HCT116 (cell line): ENCODE measurements at regions of chr6 and their contacts with region 1.

Region 1: DNA sequence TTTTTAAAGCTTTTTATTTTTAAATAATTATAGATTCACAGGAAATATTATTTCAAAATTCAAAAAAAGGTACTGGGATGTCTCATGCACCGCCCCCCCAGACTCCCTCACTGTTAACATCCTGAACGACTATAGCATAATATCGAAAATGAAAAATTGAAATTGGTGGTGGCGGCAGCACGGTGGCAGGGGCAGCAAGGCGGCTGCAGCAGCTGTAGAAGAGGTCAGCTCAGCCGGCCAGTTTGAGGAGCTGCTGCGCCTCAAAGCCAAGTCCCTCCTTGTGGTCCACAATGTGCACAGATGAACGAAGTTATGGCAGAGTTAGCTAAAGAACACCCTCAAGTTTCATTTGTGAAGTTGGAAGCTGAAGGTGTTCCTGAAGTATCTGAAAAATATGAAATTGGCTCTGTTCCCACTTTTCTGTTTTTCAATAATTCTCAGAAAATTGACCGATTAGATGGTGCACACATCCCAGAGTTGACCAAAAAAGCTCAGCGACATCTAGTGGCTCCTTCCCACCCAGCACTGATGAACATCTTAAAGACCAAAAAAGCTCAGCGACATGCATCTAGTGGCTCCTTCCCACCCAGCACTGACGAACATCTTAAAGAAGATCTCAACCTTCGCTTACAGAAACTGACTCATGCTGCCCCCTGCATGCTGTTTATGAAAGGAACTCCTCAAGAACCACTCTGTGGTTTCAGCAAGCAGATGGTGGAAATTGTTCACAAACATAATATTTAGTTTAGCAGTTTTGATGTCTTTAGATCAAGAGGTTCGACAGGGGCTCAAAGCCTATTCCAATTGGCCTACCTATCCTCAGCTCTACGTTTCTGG is 100.8 kb downstream of the FAM217A start:
- DNase-seq: peak; percentile 74
- ATAC-seq: peak; percentile 96
- H3K4me3 ChIP-seq: no peak overlapping the region
- H3K27ac ChIP-seq: no peak overlapping the region
- H3K4me1 ChIP-seq: peaks cover 2 to 5% of the 10 kb centered on the region in 2 experiments; a peak in 3 of 4 replicates
- H3K27me3 ChIP-seq: no peaks in the 10 kb centered on the region
- CTCF ChIP-seq: peak; percentile 71 to 83 (median 79)
- POLR2A ChIP-seq: no peak
- RAD21 ChIP-seq: peak; percentile 69

Region 2: GRCh38 chr6:3742426-3743344 is 235.4 kb before region 1 on chr6:
- CTCF ChIA-PET with region 1: interaction called, 8 read pairs
- POLR2A ChIA-PET with region 1: no interaction called
- RAD21 ChIA-PET with region 1: no interaction called
- intact Hi-C with region 1: loop called (anchors 1 kb)
- DNase-seq: peak; percentile 48
- ATAC-seq: peak; percentile 96
- H3K4me3 ChIP-seq: peak overlapping the region in 1 of 2 experiments; percentile 17; a peak in 2 of 4 replicates
- H3K27ac ChIP-seq: no peak overlapping the region
- H3K4me1 ChIP-seq: peaks cover 0 to 13% of the 10 kb centered on the region in 2 experiments; a peak in 2 of 4 replicates
- H3K27me3 ChIP-seq: no peaks in the 10 kb centered on the region
- CTCF ChIP-seq: peak; percentile 86 to 95 (median 91)
- POLR2A ChIP-seq: no peak
- RAD21 ChIP-seq: peak; percentile 98

Region 3: GRCh38 chr6:3887150-3887700 is 90.9 kb before region 1 on chr6:
- CTCF ChIA-PET with region 1: interaction called, 12 read pairs
- POLR2A ChIA-PET with region 1: no interaction called
- RAD21 ChIA-PET with region 1: no interaction called
- intact Hi-C with region 1: no loop called
- DNase-seq: no peak
- ATAC-seq: no peak
- H3K4me3 ChIP-seq: no peak overlapping the region
- H3K27ac ChIP-seq: no peak overlapping the region
- H3K4me1 ChIP-seq: 0 out of 4 replicates have a peak, but pooled peaks cover 0 to 5% of the 10 kb centered on the region in 2 experiments
- H3K27me3 ChIP-seq: no peaks in the 10 kb centered on the region
- CTCF ChIP-seq: peak; percentile 26 to 46 (median 39); a peak in 4 of 6 replicates
- POLR2A ChIP-seq: no peak
- RAD21 ChIP-seq: peak; percentile 64

Region 4: GRCh38 chr6:3990692-3991501 is 12.8 kb after region 1 on chr6:
- CTCF ChIA-PET with region 1: interaction called, 24 read pairs
- POLR2A ChIA-PET with region 1: no interaction called
- RAD21 ChIA-PET with region 1: interaction called, 3 read pairs
- intact Hi-C with region 1: no loop called
- DNase-seq: peak; percentile 65
- ATAC-seq: peak; percentile 95
- H3K4me3 ChIP-seq: no peak overlapping the region
- H3K27ac ChIP-seq: no peak overlapping the region
- H3K4me1 ChIP-seq: peaks cover 5 to 10% of the 10 kb centered on the region in 2 experiments
- H3K27me3 ChIP-seq: no peaks in the 10 kb centered on the region
- CTCF ChIP-seq: peak; percentile 67 to 94 (median 94)
- POLR2A ChIP-seq: no peak
- RAD21 ChIP-seq: peak; percentile 87

Region 5: GRCh38 chr6:4008324-4009047 is 30.4 kb after region 1 on chr6:
- CTCF ChIA-PET with region 1: interaction called, 10 read pairs
- POLR2A ChIA-PET with region 1: no interaction called
- RAD21 ChIA-PET with region 1: no interaction called
- intact Hi-C with region 1: no loop called
- DNase-seq: peak; percentile 56
- ATAC-seq: peak; percentile 80
- H3K4me3 ChIP-seq: no peak overlapping the region
- H3K27ac ChIP-seq: no peak overlapping the region
- H3K4me1 ChIP-seq: peaks cover 0 to 9% of the 10 kb centered on the region in 2 experiments; a peak in 2 of 4 replicates
- H3K27me3 ChIP-seq: no peaks in the 10 kb centered on the region
- CTCF ChIP-seq: peak; percentile 44 to 62 (median 54); a peak in 4 of 6 replicates
- POLR2A ChIP-seq: no peak
- RAD21 ChIP-seq: peak; percentile 73

Region 6: DNA sequence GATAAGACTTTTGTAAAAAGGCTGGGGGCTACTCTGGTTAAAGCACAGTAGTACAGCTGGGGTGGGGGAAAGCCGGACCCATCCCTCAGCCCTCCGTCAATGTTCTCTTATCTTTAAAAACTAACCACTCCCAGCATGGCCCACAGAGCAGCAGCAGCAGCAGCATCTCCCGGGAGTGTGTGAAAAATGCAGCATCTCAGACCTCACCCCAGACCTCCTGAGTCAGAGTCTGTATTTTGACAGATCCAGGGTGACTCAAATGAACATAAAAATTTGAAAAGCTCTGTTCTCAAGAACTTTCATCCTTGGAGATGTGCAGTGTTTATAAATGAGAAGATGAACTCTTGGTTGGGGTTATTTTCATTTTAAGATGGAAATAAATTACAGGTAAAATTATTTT is 435.0 kb after region 1 on chr6:
- CTCF ChIA-PET with region 1: no interaction called
- POLR2A ChIA-PET with region 1: no interaction called
- RAD21 ChIA-PET with region 1: no interaction called
- intact Hi-C with region 1: no loop called
- DNase-seq: no peak
- ATAC-seq: no peak
- H3K4me3 ChIP-seq: no peak overlapping the region
- H3K27ac ChIP-seq: no peak overlapping the region
- H3K4me1 ChIP-seq: no peaks in the 10 kb centered on the region
- H3K27me3 ChIP-seq: no peaks in the 10 kb centered on the region
- CTCF ChIP-seq: no peak
- POLR2A ChIP-seq: no peak
- RAD21 ChIP-seq: no peak